Right ventricle myocardium inferior (tissue), 1 donor: ENCODE measurements at regions of chr4 and their contacts with region 1.

Region 1: GRCh38 chr4:151362404-151363164 is 37.2 kb upstream of the SH3D19 start:
- DNase-seq: peak; percentile 82
- ATAC-seq: peak; percentile 95

Region 2: DNA sequence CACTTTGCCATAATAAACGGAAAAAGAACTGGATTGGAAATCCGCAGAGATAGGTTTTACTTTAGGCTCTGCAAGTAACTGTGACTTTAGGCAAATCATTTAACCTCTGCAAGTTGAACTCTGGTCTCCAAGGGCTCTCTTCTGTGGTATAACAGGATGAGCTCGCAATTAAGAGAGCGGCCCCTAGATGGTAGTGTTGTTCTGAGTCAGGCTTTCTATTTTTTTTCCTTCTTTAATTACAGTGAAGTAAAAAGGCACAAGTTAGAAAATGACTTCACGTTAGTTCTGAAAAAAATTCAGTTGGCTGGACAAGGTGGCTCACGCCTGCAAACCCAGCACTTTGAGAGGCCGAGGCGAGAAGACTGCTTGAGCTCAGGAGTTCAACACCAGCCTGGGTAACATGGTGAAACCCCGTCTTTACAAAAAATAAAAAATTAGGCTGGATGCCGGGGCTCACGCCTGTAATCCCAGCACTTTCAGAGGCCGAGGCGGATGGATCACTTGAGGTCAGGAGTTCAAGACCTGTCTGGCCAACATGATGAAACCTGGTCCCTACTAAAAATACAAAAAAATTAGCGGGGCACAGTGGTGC is 245.1 kb before region 1 on chr4:
- intact Hi-C with region 1: loop called (anchors 2 kb)
- DNase-seq: no peak
- ATAC-seq: peak; percentile 62

Region 3: GRCh38 chr4:151202851-151203455 is 159.6 kb before region 1 on chr4:
- intact Hi-C with region 1: no loop called
- DNase-seq: no peak
- ATAC-seq: peak; percentile 24

Region 4: DNA sequence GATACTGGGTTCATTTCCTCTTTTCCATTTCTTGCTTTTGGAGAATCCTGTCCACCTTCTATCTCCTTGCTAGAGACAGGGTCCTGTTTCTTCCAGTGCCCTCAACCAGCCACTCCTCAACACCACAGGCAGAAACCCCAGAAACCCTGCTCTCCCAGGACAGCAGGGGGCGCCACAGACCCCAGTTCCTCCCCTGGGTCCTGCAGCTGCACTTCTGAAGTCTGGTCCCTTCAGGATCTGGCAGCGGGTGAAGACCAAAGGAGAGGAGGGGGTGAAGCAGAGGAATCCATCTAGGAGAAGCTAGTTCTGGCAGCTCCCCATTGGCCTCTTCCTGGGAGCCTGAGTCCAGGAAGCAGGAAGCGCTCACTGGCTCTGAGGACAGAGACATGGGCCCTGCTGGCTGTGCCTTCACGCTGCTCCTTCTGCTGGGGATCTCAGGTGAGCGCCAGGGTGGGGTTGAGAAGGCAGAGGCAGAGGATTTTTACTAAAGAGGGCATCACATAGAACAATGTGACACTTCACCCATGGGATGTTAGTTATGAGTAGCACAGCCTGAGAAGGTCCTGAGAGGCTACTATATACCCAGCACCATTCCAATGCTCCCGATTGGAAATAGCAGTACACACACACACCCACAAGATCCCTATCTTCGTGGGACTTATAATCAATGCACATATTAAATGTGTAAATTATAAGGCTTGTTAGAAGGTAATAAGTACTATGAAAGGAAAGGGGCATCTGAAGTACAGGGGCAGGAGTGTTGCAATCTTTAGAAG is 85.6 kb before region 1 on chr4 and contains the start of gene PRSS48:
- intact Hi-C with region 1: loop called (anchors 1 kb)
- DNase-seq: peak; percentile 62
- ATAC-seq: peak; percentile 61
- total RNA-seq, gene PRSS48: not detected

Region 5: GRCh38 chr4:151325111-151325948 is 37.3 kb before region 1 on chr4 and contains the start of gene SH3D19:
- intact Hi-C with region 1: loop called (anchors 2 kb)
- DNase-seq: peak; percentile 77
- ATAC-seq: peak; percentile 95
- total RNA-seq, gene SH3D19: 108 TPM